ENCODE measurements at regions of chr1 and their contacts with region 1.

Region 1: DNA sequence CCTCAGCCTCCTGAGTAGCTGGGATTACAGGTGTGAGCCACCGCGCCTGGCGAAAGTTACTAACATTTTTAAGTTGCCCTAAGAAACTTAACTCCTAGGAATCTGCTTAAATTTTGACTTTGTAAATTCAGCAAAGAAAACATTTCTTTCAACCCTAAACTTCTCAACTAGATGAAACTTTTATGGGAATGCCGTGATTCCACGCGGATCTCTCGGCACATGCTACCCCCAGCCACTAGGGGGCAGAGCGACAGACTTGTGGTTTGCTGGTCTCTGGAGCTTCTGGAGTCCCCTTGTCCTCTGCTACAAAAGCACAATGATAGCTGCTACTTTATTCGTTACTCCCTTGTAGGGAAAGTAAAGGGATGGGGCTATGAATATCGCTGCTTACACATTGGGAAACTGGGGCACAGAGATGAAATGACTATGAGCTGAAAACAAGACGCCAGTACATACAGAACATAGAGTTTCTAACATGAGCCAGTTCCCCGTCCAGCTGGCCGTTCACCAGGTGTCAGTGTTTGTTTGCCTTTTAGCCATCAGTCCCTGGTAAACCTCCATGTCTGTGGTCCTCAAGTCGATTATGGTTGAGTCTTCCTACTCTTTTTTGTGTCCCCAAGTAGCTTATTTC is 114.7 kb downstream of the PBX1 start:
- DNase-seq: peak in 1 of 3 donors; percentile 16
- H3K4me3 ChIP-seq: no peak overlapping the region
- H3K4me3 Mint-ChIP-seq: no peak overlapping the region
- H3K27ac ChIP-seq: no peak overlapping the region
- H3K27ac Mint-ChIP-seq: no peak overlapping the region
- H3K4me1 ChIP-seq: no peaks in the 10 kb centered on the region
- H3K4me1 Mint-ChIP-seq: no peaks in the 10 kb centered on the region
- H3K27me3 ChIP-seq: no peaks in the 10 kb centered on the region
- H3K27me3 Mint-ChIP-seq: peaks cover 11 to 15% (median 13%) of the 10 kb centered on the region in 3 donors
- CTCF ChIP-seq: peak; percentile 74

Region 2: GRCh38 chr1:164557270-164557669 is 116.4 kb before region 1 on chr1:
- intact Hi-C with region 1: no loop called
- DNase-seq: no peak
- H3K4me3 ChIP-seq: no peak overlapping the region
- H3K4me3 Mint-ChIP-seq: no peak overlapping the region
- H3K27ac ChIP-seq: no peak overlapping the region
- H3K27ac Mint-ChIP-seq: no peak overlapping the region
- H3K4me1 ChIP-seq: peaks cover 11 to 18% of the 10 kb centered on the region in 2 donors
- H3K4me1 Mint-ChIP-seq: peaks cover 28% of the 10 kb centered on the region
- H3K27me3 ChIP-seq: peaks cover 20 to 27% of the 10 kb centered on the region in 2 donors
- H3K27me3 Mint-ChIP-seq: peaks cover 28 to 32% (median 28%) of the 10 kb centered on the region in 3 donors
- CTCF ChIP-seq: no peak

Region 3: GRCh38 chr1:164786980-164787833 is 113.5 kb after region 1 on chr1:
- intact Hi-C with region 1: loop called in 1 of 2 experiments (anchors 5 kb)
- DNase-seq: peak; percentile 34 to 65 (median 61)
- H3K4me3 ChIP-seq: no peak overlapping the region
- H3K4me3 Mint-ChIP-seq: peak overlapping the region in 1 of 2 donors; percentile 13
- H3K27ac ChIP-seq: no peak overlapping the region
- H3K27ac Mint-ChIP-seq: no peak overlapping the region
- H3K4me1 ChIP-seq: no peaks in the 10 kb centered on the region
- H3K4me1 Mint-ChIP-seq: peaks cover 4% of the 10 kb centered on the region
- H3K27me3 ChIP-seq: no peaks in the 10 kb centered on the region
- H3K27me3 Mint-ChIP-seq: peaks cover 4 to 22% (median 17%) of the 10 kb centered on the region in 3 donors
- CTCF ChIP-seq: peak; percentile 87